Activated B cell treated with CpG ODN at 0.5 μM for 24 hours (primary cell): ENCODE measurements at regions of chr19 and their contacts with region 1.

Region 1: GRCh38 chr19:12346896-12347295 is 13.5 kb upstream of the ZNF563 start:
- DNase-seq: no peak
- ATAC-seq: peak; percentile 61
- H3K4me3 Mint-ChIP-seq: no peak overlapping the region
- H3K27ac Mint-ChIP-seq: no peak overlapping the region
- H3K4me1 Mint-ChIP-seq: no peaks in the 10 kb centered on the region
- H3K27me3 Mint-ChIP-seq: no peaks in the 10 kb centered on the region
- CTCF ChIP-seq: no peak

Region 2: GRCh38 chr19:12075538-12076139 is 271.3 kb before region 1 on chr19:
- CTCF ChIA-PET with region 1: no interaction called
- POLR2A ChIA-PET with region 1: interaction called, 12 read pairs
- intact Hi-C with region 1: no loop called
- DNase-seq: no peak
- ATAC-seq: no peak
- H3K4me3 Mint-ChIP-seq: no peak overlapping the region
- H3K27ac Mint-ChIP-seq: no peak overlapping the region
- H3K4me1 Mint-ChIP-seq: no peaks in the 10 kb centered on the region
- H3K27me3 Mint-ChIP-seq: no peaks in the 10 kb centered on the region
- CTCF ChIP-seq: no peak

Region 3: GRCh38 chr19:12126707-12127106 is 220.2 kb before region 1 on chr19:
- CTCF ChIA-PET with region 1: interaction called, 5 read pairs
- POLR2A ChIA-PET with region 1: no interaction called
- intact Hi-C with region 1: loop called (anchors 1 kb)
- DNase-seq: no peak
- ATAC-seq: no peak
- H3K4me3 Mint-ChIP-seq: no peak overlapping the region
- H3K27ac Mint-ChIP-seq: no peak overlapping the region
- H3K4me1 Mint-ChIP-seq: no peaks in the 10 kb centered on the region
- H3K27me3 Mint-ChIP-seq: no peaks in the 10 kb centered on the region
- CTCF ChIP-seq: no peak

Region 4: GRCh38 chr19:12202250-12202649 is 144.6 kb before region 1 on chr19:
- CTCF ChIA-PET with region 1: interaction called, 4 read pairs
- POLR2A ChIA-PET with region 1: interaction called, 4 read pairs
- intact Hi-C with region 1: loop called (anchors 1 kb)
- DNase-seq: peak; percentile 33
- ATAC-seq: peak; percentile 71
- H3K4me3 Mint-ChIP-seq: no peak overlapping the region
- H3K27ac Mint-ChIP-seq: no peak overlapping the region
- H3K4me1 Mint-ChIP-seq: peaks cover 6% of the 10 kb centered on the region
- H3K27me3 Mint-ChIP-seq: no peaks in the 10 kb centered on the region
- CTCF ChIP-seq: no peak

Region 5: GRCh38 chr19:12440541-12441316 is 93.8 kb after region 1 on chr19 and contains the start of gene ZNF443:
- CTCF ChIA-PET with region 1: no interaction called
- POLR2A ChIA-PET with region 1: no interaction called
- intact Hi-C with region 1: no loop called
- DNase-seq: peak; percentile 98
- ATAC-seq: peak; percentile 95
- H3K4me3 Mint-ChIP-seq: peak within 1 kb of the TSS; percentile 100
- H3K27ac Mint-ChIP-seq: peak within 1 kb of the TSS; percentile 89
- H3K4me1 Mint-ChIP-seq: peaks cover 27% of the 10 kb centered on the region
- H3K27me3 Mint-ChIP-seq: no peaks in the 10 kb centered on the region
- CTCF ChIP-seq: no peak
- total RNA-seq, gene ZNF443: 3.5 and 3.6 TPM in 2 replicates

Region 6: GRCh38 chr19:12544401-12544876 is 197.5 kb after region 1 on chr19:
- CTCF ChIA-PET with region 1: no interaction called
- POLR2A ChIA-PET with region 1: no interaction called
- intact Hi-C with region 1: no loop called
- DNase-seq: no peak
- ATAC-seq: no peak
- H3K4me3 Mint-ChIP-seq: no peak overlapping the region
- H3K27ac Mint-ChIP-seq: peak overlapping the region; percentile 10
- H3K4me1 Mint-ChIP-seq: peaks cover 46% of the 10 kb centered on the region
- H3K27me3 Mint-ChIP-seq: no peaks in the 10 kb centered on the region
- CTCF ChIP-seq: no peak